ENCODE measurements at regions of chr15 and their contacts with region 1.

Region 1: DNA sequence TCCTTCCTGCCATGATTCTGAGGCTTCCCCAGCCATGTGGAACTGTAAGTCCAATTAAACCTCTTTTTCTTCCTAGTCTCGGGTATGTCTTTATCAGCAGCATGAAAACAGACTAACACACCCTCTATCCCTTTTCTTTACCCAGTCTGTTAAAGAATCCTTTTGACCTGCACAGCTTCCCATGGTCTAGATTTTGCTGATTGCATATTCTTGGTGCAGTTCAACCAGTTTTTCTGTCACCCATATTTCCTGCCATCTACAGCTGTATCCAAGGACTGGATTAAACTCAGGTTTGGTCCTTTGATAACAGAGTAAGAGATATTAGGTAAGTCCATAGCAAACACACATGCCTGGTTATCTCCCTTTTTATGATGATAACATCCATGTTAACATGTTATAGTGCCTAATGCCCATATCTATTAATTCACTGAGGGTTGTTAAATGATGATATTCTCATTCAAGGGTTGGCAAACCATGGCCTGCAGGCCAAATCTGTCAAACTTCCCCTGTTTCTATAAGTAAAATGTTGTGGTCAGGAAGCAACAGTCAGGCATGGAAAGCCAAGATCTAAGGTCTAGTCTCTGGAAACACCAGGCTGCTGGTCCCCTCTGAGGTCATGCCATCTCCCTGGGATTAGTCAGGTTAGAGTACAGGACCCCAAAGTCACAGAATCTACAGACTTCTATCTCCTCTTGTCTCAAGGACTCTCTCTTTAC is 14.9 kb upstream of the HERC1 start:
- DNase-seq: no peak
- CTCF ChIP-seq: no peak

Region 2: DNA sequence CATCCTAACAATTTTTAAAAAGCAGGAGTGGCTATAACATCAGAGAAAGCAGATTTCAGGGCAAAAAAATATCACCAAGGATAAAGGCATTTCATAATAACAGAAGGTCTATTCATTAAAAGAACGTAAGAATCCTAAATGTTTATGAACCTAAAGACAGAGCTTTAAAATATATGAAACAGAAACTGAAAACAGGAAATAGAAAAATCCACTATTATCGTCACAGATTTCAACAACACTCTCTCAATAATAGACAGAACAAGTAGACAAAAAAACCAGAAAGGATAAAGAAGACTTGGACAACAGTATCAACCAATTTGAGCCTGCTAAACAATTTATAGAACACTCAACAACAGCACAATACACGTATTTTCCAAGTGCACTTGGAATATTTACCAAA is 180.1 kb before region 1 on chr15:
- CTCF ChIA-PET with region 1: no interaction called
- POLR2A ChIA-PET with region 1: no interaction called
- DNase-seq: peak; percentile 18
- CTCF ChIP-seq: no peak

Region 3: GRCh38 chr15:63791228-63791627 is 57.4 kb before region 1 on chr15:
- CTCF ChIA-PET with region 1: no interaction called
- POLR2A ChIA-PET with region 1: interaction called, 10 read pairs
- DNase-seq: no peak
- CTCF ChIP-seq: no peak